Caco-2 (cell line): ENCODE measurements at regions of chr14 and their contacts with region 1.

Region 1: DNA sequence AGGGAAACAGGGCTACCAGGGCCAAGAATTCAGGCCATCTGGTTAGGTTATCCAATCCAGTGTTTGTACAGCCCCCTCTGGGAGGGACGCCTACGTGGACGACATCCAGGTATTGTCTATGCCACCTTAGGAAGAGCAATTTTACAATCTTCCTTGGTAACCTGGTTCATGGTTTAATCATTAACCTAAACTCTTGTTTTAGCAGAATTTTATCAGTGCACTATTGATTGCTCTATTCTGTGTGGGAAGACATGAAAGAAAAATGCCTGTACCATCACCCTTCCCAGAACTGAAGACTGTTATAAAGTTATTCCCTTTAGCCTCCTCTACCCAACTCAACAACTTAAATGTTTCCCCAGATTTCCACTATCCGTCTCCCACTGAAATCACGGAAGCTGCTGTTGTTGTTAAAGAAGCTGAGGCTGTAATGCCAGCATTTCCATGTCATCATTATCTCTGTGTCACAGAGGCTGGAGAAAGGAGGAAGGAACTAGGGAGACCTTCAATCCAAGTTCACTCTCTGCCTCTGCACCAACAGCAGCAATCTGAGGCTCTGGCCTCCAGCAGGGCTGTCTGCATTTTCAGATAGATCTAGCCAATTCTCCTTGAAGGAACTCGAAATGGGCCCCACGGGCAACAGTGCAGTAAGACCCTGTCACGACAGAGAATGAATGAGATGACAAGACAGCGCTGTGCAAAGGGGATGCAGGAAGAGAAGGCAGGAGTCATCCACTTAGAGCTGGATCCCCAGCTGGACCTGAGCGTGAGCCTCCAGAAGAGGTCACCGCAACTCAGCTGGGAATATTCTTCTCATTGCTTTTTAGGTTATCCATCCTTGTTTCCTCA is 183.4 kb upstream of the GZMB start:
- DNase-seq: peak; percentile 41 to 74
- H3K4me3 ChIP-seq: 0 out of 2 replicates have a peak overlapping the region, but pooled peaks have one; percentile 5
- H3K4me3 Mint-ChIP-seq: peak overlapping the region; percentile 68
- H3K27ac Mint-ChIP-seq: peak overlapping the region; percentile 89
- H3K4me1 ChIP-seq: peaks cover 69% of the 10 kb centered on the region
- H3K4me1 Mint-ChIP-seq: peaks cover 33% of the 10 kb centered on the region
- H3K27me3 ChIP-seq: no peaks in the 10 kb centered on the region
- H3K27me3 Mint-ChIP-seq: no peaks in the 10 kb centered on the region
- CTCF ChIP-seq: peak; percentile 27 to 35

Region 2: DNA sequence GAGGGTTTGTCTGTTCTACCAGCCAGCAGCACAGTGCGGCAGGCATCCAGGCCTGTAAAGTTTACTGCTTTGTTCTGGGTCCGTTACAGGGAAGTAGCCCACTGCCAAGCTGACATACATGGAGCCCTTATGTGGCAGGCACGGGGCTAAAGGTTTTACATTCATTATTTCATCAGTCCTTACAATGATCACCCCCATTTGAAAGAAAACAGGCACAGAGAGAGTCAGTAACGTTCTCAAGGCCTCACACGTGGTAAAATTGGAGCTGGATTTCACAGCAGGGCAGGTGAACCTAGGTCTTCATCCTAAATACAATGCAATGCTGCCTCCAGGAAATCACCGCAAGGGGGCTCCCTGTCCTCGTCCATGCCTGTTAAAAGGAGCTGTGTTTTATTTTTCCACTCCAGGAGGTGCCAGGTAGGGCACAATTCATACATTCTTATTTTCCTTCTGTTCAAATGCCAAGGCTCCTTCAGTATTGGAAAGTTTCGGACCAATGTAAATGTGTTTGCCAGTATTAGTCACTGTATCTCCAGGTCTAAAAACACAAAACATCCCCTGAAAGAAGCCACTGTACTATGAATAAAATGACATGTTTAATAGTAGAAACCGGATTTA is 11.3 kb before region 1 on chr14:
- CTCF ChIA-PET with region 1: interaction called, 13 read pairs
- POLR2A ChIA-PET with region 1: no interaction called
- intact Hi-C with region 1: no loop called
- DNase-seq: peak; percentile 73 to 82
- H3K4me3 ChIP-seq: no peak overlapping the region
- H3K4me3 Mint-ChIP-seq: no peak overlapping the region
- H3K27ac Mint-ChIP-seq: peak overlapping the region; percentile 41
- H3K4me1 ChIP-seq: peaks cover 48% of the 10 kb centered on the region
- H3K4me1 Mint-ChIP-seq: peaks cover 22% of the 10 kb centered on the region
- H3K27me3 ChIP-seq: no peaks in the 10 kb centered on the region
- H3K27me3 Mint-ChIP-seq: no peaks in the 10 kb centered on the region
- CTCF ChIP-seq: peak; percentile 83 to 86

Region 3: DNA sequence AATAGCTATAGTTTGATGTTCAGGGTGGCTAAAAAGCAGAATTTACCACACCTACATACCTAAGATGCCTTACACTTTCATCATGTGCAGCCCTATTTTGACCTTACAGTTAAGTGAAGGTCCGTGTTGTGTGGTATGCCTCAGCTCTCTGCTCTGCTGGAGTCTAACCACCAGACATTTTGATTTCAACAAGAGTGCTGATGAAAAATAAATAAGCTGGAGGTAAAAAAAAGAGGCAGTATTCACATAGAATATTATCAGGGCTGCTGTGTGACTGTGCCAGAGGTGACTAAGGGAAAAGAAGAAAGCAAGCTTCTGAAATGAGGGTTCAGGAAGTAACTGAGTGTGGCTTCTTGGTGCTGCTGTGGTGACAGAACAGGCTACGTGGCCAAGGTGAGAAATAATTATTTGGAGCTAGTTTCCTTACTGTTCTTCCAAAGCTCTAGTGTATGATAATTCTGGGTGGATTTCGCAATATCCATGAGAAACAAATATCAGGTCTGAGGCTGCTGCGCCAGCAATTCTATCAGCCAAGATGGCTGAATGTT is 43.7 kb after region 1 on chr14:
- CTCF ChIA-PET with region 1: interaction called, 5 read pairs
- POLR2A ChIA-PET with region 1: no interaction called
- intact Hi-C with region 1: loop called (anchors 1 kb)
- DNase-seq: peak; percentile 52 to 53
- H3K4me3 ChIP-seq: 0 out of 2 replicates have a peak overlapping the region, but pooled peaks have one; percentile 2
- H3K4me3 Mint-ChIP-seq: peak overlapping the region; percentile 74
- H3K27ac Mint-ChIP-seq: peak overlapping the region; percentile 97
- H3K4me1 ChIP-seq: peaks cover 36% of the 10 kb centered on the region
- H3K4me1 Mint-ChIP-seq: peaks cover 29% of the 10 kb centered on the region
- H3K27me3 ChIP-seq: no peaks in the 10 kb centered on the region
- H3K27me3 Mint-ChIP-seq: no peaks in the 10 kb centered on the region
- CTCF ChIP-seq: no peak

Region 4: GRCh38 chr14:24952851-24953666 is 135.6 kb after region 1 on chr14:
- CTCF ChIA-PET with region 1: interaction called, 3 read pairs
- POLR2A ChIA-PET with region 1: no interaction called
- intact Hi-C with region 1: loop called (anchors 5 kb)
- DNase-seq: peak; percentile 55 to 59
- H3K4me3 ChIP-seq: no peak overlapping the region
- H3K4me3 Mint-ChIP-seq: no peak overlapping the region
- H3K27ac Mint-ChIP-seq: no peak overlapping the region
- H3K4me1 ChIP-seq: peaks cover 22% of the 10 kb centered on the region
- H3K4me1 Mint-ChIP-seq: peaks cover 27% of the 10 kb centered on the region
- H3K27me3 ChIP-seq: no peaks in the 10 kb centered on the region
- H3K27me3 Mint-ChIP-seq: no peaks in the 10 kb centered on the region
- CTCF ChIP-seq: peak; percentile 45 to 63

Region 5: GRCh38 chr14:25042362-25043299 is 225.2 kb after region 1 on chr14:
- CTCF ChIA-PET with region 1: interaction called, 4 read pairs
- POLR2A ChIA-PET with region 1: no interaction called
- intact Hi-C with region 1: loop called (anchors 1 kb)
- DNase-seq: peak; percentile 55 to 56
- H3K4me3 ChIP-seq: no peak overlapping the region
- H3K4me3 Mint-ChIP-seq: no peak overlapping the region
- H3K27ac Mint-ChIP-seq: peak overlapping the region; percentile 44
- H3K4me1 ChIP-seq: no peaks in the 10 kb centered on the region; the same call in 1 of the 2 replicates
- H3K4me1 Mint-ChIP-seq: peaks cover 22% of the 10 kb centered on the region
- H3K27me3 ChIP-seq: no peaks in the 10 kb centered on the region
- H3K27me3 Mint-ChIP-seq: no peaks in the 10 kb centered on the region
- CTCF ChIP-seq: peak; percentile 54 to 79